ENCODE measurements at regions of chr6 and their contacts with region 1.

Region 1: GRCh38 chr6:73610444-73611275 is 43.1 kb downstream of the SLC17A5 start:
- DNase-seq: no peak

Region 2: GRCh38 chr6:73515204-73515655 is 95.4 kb before region 1 on chr6:
- CTCF ChIA-PET with region 1: interaction called, 16 read pairs
- POLR2A ChIA-PET with region 1: interaction called, 26 read pairs
- DNase-seq: no peak

Region 3: DNA sequence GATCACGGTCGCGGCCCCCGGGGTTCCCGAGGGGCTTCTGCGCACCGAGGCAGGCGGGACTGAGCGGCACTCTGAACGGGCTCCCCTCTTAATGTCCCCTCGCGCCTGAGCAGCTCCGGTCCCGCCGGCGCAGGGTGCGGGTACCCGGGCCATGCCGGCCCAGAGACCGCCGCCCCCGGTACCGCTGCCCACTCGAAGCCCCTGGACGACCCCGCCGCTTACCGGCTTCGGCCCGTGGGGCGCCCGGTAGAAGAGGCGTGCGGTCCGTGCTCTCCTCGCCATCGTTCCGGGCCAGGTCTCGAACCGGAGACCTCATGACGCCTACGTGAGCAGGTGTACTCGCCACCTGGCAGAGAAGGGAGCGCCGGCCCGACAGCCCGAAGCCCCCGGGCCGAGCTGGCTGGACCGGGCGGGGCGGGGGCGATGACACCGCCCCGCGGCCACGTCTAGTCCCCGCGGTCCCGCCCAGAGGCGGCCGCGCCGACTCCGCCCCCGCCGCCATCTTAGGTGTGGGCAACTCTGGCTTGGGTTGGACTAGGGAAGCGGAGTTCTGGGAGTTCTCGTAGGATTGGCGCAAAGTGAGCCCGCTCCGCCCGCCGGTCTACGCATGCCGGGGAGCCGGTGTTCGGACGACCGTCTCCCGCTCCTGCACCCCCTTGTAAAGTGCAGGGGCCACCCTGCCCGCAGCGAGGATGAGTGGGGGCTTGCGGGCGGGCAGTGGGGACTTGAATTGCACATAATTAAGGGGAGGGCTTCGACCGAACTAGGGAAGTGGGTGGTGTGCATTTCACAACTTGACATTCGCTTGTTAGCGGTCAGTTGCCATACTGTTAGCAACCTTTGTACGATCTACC is 43.1 kb after region 1 on chr6 and contains the start of gene SLC17A5:
- CTCF ChIA-PET with region 1: no interaction called
- POLR2A ChIA-PET with region 1: no interaction called
- DNase-seq: peak; percentile 91

Region 4: DNA sequence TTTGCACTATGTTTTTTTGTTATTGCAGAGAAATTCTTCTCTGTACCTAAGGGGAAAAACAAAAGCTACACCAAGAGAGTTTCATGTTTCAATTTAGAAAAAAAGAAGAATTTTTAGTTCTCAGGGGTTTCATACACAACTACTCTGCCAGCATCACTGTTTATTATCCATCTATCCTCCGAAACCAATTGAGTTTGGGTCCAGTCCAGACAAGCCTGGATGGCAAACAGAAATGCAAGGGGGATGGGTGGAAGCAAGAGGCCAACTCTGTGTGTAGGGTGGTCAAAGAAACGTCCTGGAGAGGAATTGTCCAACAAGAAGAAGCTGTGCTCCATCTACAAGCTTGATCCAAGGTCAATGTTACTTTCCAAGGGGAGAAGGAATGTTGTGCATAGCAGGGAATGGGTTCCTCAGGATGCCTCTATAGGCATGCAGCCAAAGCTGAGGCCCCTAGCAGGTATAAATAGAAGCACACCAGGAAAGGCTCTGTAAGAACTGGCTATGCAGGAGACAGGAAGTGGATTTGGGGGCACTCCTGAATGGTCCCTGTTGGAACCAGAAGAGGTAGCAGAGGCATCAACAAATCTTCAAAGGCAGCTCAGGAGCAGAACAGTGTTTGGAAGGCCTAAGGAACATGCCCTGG is 1818.5 kb after region 1 on chr6:
- CTCF ChIA-PET with region 1: interaction called, 10 read pairs
- POLR2A ChIA-PET with region 1: no interaction called
- DNase-seq: no peak

Measured in HEK293T (cell line).